Calu3 (cell line): ENCODE measurements at regions of chr2 and their contacts with region 1.

Region 1: GRCh38 chr2:233976690-233977294 is 59.6 kb downstream of the TRPM8 start:
- DNase-seq: peak; percentile 68
- H3K4me3 Mint-ChIP-seq: no peak overlapping the region
- H3K27ac Mint-ChIP-seq: peak overlapping the region; percentile 69
- H3K4me1 Mint-ChIP-seq: peaks cover 83% of the 10 kb centered on the region
- H3K27me3 Mint-ChIP-seq: no peaks in the 10 kb centered on the region
- CTCF ChIP-seq: peak; percentile 49

Region 2: GRCh38 chr2:233854241-233854981 is 122.4 kb before region 1 on chr2 and contains the start of gene HJURP:
- CTCF ChIA-PET with region 1: interaction called, 6 read pairs
- intact Hi-C with region 1: loop called (anchors 10 kb)
- DNase-seq: peak; percentile 94
- H3K4me3 Mint-ChIP-seq: peak within 1 kb of the TSS; percentile 90
- H3K27ac Mint-ChIP-seq: peak within 1 kb of the TSS; percentile 88
- H3K4me1 Mint-ChIP-seq: peaks cover 27% of the 10 kb centered on the region
- H3K27me3 Mint-ChIP-seq: no peaks in the 10 kb centered on the region
- CTCF ChIP-seq: no peak
- total RNA-seq, gene HJURP: 58.5 and 71.0 TPM in 2 replicates

Region 3: DNA sequence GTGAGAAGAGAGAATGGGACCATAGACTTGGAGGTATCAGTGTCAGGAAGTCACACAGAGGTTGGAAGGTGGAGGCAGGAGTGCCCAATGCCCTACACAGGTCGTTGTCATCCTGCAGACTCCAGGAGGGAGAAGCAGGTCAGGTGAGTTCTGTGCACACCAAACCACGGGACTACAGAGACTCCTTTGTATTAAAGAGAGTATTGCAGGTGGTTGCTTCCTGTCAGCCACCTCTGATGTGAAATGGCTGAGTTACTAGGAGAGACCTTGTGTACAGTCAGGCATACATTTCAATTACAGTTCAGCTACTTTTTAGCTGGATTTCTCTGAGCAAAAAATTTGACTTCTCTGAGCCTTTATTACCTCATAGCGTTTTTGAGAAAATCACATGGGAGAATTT is 125.3 kb after region 1 on chr2:
- CTCF ChIA-PET with region 1: interaction called, 4 read pairs
- intact Hi-C with region 1: loop called (anchors 1 kb)
- DNase-seq: peak; percentile 72
- H3K4me3 Mint-ChIP-seq: no peak overlapping the region
- H3K27ac Mint-ChIP-seq: peak overlapping the region; percentile 89
- H3K4me1 Mint-ChIP-seq: peaks cover 31% of the 10 kb centered on the region
- H3K27me3 Mint-ChIP-seq: no peaks in the 10 kb centered on the region
- CTCF ChIP-seq: peak; percentile 44

Region 4: GRCh38 chr2:234257856-234258561 is 281.2 kb after region 1 on chr2:
- CTCF ChIA-PET with region 1: interaction called, 4 read pairs
- intact Hi-C with region 1: loop called (anchors 2 kb)
- DNase-seq: peak; percentile 89
- H3K4me3 Mint-ChIP-seq: peak overlapping the region; percentile 44
- H3K27ac Mint-ChIP-seq: peak overlapping the region; percentile 91
- H3K4me1 Mint-ChIP-seq: peaks cover 48% of the 10 kb centered on the region
- H3K27me3 Mint-ChIP-seq: no peaks in the 10 kb centered on the region
- CTCF ChIP-seq: peak; percentile 80

Region 5: DNA sequence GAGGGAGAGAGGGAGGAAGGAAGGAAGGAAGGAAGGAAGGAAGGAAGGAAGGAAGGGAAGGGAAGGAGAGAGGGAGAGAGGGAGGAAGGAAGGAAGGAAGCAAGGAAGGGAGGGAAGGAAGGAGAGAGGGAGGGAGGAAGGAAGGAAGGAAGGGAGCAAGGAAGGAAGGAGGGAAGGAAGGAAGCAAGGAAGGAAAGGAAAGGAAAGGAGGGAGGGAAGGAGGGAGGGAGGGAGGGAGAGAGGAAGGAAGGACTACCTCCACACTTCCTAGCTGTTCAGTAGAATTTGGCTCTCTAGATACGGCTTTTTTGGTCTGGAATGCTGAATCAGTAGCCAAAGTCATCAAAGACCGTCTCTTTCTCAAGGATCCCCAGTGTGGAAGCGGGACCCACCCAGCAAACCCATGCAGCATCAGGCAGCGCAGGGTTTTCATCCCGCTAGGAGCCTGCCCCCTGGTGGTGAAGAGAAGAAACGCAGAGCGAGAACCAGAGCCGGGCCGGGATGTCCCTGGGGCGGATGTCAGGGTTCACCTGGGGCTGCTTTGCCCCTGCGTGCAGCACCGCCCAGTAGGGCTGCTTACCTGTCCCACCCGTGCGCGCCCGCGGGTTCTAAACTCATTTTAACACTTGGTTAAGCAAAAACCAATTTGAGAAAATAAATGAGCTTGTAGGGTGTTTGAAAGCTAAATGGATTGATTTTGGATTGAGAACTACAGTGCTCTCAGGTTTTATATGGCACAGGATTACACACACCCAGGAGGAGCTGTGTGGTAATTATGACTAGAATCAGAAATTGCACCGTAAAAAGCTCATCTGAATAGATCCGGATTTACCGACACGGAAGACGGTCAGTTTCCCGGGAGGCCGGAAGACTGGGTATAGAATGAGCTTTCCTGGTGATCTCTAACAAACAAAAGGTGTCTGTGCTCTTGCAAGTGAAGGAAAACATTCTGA is 568.1 kb after region 1 on chr2:
- CTCF ChIA-PET with region 1: interaction called, 9 read pairs
- intact Hi-C with region 1: loop called (anchors 1 kb)
- DNase-seq: peak; percentile 85
- H3K4me3 Mint-ChIP-seq: no peak overlapping the region
- H3K27ac Mint-ChIP-seq: no peak overlapping the region
- H3K4me1 Mint-ChIP-seq: peaks cover 9% of the 10 kb centered on the region
- H3K27me3 Mint-ChIP-seq: peaks cover 39% of the 10 kb centered on the region
- CTCF ChIP-seq: peak; percentile 94